Activated CD4-positive, alpha-beta T cell treated with anti-CD3 and anti-CD28 coated beads for 36 hours (primary cell): ENCODE measurements at regions of chr9 and their contacts with region 1.

Region 1: DNA sequence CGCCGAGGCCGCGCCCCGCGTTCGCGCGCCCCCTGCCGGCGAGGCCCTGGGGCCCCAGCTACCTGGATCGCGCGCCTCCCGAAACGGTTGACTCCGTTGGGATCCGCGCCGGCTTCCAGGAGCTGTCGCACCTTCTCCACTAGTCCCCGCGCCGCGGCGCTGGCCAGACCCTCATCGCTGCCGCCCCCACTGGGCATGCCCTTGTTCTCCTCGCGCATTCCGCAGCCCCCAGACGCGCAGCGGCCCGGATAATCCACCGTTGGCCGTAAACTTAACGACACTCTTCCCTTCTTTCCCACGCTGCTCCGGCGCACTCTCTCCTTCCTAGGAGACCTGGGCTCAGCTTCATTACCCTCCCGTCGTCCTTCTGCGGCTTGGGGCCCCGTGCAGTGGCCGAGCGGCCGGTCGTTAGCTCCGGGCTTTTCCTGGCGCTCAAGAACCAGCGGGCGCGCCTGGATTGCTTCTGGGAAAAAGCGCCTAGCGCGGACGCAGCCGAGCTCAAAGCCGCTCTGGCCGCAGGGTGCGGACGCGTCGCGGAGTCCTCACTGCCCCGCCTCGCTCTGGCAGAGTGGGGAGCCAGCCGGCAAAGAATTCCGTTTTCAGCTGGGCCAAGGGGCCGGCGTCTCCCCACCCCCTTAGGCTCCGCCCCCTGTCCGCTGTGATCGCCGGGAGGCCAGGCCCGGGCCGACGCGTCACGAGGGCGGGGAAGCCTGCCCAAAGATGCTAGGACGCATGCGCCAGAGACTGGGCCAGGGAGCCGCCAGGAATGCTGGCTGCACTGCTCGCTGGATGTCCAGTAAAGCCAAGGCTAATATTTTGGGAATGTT is at the start of gene CDKN2B:
- DNase-seq: peak; percentile 82
- ATAC-seq: peak; percentile 87
- H3K4me3 Mint-ChIP-seq: peak within 1 kb of the TSS; percentile 76
- H3K27ac Mint-ChIP-seq: no peak within 1 kb of the TSS
- H3K4me1 Mint-ChIP-seq: peaks cover 20% of the 10 kb centered on the region
- H3K27me3 Mint-ChIP-seq: peaks cover 56% of the 10 kb centered on the region
- total RNA-seq, gene CDKN2B: not detected

Region 2: GRCh38 chr9:21965401-21965951 is 43.5 kb before region 1 on chr9:
- CTCF ChIA-PET with region 1: interaction called, 27 read pairs
- POLR2A ChIA-PET with region 1: no interaction called
- intact Hi-C with region 1: loop called (anchors 1 to 2 kb)
- DNase-seq: peak; percentile 75
- ATAC-seq: peak; percentile 84
- H3K4me3 Mint-ChIP-seq: peak overlapping the region; percentile 53
- H3K27ac Mint-ChIP-seq: peak overlapping the region; percentile 5
- H3K4me1 Mint-ChIP-seq: peaks cover 24% of the 10 kb centered on the region
- H3K27me3 Mint-ChIP-seq: peaks cover 85% of the 10 kb centered on the region

Region 3: DNA sequence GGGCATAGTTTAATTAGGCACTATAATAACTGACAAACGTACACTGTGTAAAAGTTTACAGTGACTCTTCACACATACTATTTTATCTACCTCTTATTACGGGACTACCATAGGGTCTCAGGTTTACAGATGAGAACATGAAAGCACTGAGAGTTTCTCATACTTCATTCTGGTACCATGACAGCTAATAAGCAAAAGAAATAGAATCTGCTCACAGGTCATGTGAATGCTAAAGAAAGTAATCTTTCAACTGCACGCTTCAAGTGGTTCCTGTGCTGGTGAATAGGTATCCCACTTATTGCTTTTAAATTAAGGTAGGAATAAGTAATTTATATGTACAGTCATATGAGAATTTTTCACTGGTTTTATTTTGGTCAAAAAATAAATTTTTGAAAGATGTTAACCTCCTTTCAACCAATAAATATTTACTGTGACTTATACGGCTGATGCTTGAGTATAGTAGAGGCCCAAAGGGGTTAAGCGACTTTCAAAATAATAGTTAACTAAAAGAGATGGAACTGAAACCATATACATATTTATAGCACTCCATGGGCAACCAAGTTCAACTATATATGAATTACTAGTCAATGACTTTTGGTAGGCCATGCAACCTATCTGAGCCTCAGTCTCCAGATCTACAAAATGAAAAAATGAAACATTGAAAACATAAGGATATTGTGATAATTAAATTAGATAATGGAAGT is 22.8 kb before region 1 on chr9:
- CTCF ChIA-PET with region 1: interaction called, 31 read pairs
- POLR2A ChIA-PET with region 1: no interaction called
- intact Hi-C with region 1: no loop called
- DNase-seq: no peak
- ATAC-seq: no peak
- H3K4me3 Mint-ChIP-seq: no peak overlapping the region
- H3K27ac Mint-ChIP-seq: no peak overlapping the region
- H3K4me1 Mint-ChIP-seq: no peaks in the 10 kb centered on the region
- H3K27me3 Mint-ChIP-seq: peaks cover 65% of the 10 kb centered on the region

Region 4: GRCh38 chr9:22037954-22038690 is 29.2 kb after region 1 on chr9:
- CTCF ChIA-PET with region 1: interaction called, 24 read pairs
- POLR2A ChIA-PET with region 1: no interaction called
- intact Hi-C with region 1: loop called in 1 of 2 experiments (anchors 2 kb)
- DNase-seq: no peak
- ATAC-seq: no peak
- H3K4me3 Mint-ChIP-seq: no peak overlapping the region
- H3K27ac Mint-ChIP-seq: no peak overlapping the region
- H3K4me1 Mint-ChIP-seq: peaks cover 5% of the 10 kb centered on the region
- H3K27me3 Mint-ChIP-seq: peaks cover 14% of the 10 kb centered on the region

Region 5: DNA sequence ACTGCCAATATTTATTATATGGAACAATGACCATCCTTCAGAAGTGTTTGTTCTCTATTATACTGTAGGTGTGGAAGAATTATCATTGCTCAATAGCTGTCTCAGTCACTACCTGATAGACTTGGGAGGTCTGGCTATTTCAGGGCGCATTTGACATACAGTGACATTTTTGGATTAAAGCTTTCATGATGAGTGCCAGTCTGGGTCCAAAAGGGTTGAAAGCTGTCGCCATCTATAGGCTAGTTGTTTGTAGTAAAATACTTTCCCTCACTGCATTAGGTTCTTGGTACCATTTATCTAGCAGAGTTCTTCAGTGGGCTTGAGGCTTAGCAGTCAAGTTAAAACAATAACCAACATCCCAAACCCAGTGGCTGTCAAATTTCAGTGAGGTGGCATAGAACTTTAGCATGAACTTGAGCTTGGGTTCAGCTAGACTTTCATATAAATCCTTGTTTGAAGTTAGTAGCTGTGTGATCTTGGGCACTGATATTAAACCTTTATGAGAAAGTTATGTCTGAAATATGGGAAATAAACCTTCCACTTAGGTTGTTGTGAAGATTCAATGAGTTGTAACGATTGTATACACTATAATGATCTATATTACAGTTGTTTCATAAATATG is 110.7 kb after region 1 on chr9:
- CTCF ChIA-PET with region 1: interaction called, 11 read pairs
- POLR2A ChIA-PET with region 1: no interaction called
- intact Hi-C with region 1: no loop called
- DNase-seq: peak; percentile 15
- ATAC-seq: peak; percentile 42
- H3K4me3 Mint-ChIP-seq: no peak overlapping the region
- H3K27ac Mint-ChIP-seq: no peak overlapping the region
- H3K4me1 Mint-ChIP-seq: no peaks in the 10 kb centered on the region
- H3K27me3 Mint-ChIP-seq: peaks cover 30% of the 10 kb centered on the region